A673 (cell line): ENCODE measurements at regions of chr6 and their contacts with region 1.

Region 1: DNA sequence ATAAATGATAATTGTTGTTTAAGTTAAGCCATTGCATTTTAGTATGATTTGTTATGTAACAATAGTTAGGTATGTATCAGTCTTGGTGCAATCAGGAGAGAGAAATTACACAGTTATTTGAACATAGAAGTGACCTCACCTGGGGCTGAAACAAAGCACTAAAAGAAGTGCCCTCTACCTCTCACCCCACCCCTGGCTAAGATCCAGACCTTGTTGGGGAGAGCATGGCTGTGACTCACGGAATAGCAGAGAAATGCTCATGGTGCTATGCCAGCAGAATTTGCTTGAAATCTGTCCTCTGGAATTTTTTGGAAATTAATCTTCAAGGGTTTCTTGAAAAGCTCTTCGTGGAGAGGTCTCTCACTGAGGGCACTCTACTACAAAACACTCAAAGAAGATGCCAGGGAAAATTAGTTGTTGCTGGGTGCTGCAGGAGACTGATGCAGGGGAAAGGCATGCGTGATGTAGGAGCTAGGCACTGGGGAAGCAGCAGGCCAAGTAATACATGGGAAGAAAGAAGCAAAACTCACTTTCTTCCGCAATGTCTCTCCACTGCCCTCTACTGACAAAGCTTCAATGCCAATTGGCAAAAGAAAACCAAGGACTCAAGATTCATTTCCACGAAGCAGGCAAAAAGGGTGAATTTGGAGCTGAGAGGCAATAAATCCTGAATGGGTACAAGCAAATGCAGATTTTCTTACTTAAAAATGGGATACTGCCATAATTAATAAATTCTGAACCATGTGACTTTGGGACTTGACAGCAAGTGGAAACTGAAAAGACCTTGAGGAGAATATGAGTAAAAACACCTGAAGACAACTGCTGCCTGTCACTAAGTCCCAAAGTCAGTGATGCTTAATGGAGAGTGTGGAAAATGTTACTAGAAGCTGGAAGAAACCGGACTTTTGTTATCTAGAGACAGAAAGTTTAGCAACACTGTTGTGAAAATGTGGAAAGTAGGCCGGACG is 136.3 kb upstream of the ZNF184 start:
- DNase-seq: peak; percentile 79
- H3K4me3 ChIP-seq: no peak overlapping the region
- H3K27ac ChIP-seq: no peak overlapping the region
- H3K4me1 ChIP-seq: no peaks in the 10 kb centered on the region
- H3K27me3 ChIP-seq: no peaks in the 10 kb centered on the region
- CTCF ChIP-seq: peak; percentile 76

Region 2: DNA sequence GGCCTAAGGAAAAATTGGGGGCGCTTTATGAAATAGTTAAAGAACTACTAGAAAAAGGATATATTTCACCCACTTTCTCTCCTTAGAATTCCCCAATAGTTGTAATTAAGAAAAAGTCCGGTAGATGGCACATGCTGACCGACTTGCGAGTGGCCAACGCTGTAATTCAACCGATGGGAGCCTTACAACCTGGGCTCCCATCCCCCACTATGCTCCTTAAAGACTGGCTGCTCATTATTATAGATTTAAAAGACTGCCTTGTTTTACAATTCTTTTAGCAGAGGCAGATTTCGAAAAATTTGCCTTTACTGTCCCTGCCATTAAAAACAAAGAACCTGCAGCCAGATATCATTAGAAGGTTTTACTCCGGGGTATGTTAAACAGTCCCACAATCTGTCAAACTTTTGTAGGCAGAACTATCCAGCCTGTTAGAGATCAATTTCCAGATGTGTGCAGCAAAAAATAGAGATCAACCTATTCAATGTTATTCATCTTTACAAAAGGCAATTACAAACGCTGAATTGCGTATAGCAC is 420.2 kb before region 1 on chr6:
- CTCF ChIA-PET with region 1: no interaction called
- POLR2A ChIA-PET with region 1: no interaction called
- intact Hi-C with region 1: loop called (anchors 1 kb)
- DNase-seq: peak; percentile 87
- H3K4me3 ChIP-seq: peak overlapping the region; percentile 59
- H3K27ac ChIP-seq: peak overlapping the region; percentile 5
- H3K4me1 ChIP-seq: no peaks in the 10 kb centered on the region
- H3K27me3 ChIP-seq: no peaks in the 10 kb centered on the region
- CTCF ChIP-seq: peak; percentile 67

Region 3: GRCh38 chr6:27230758-27231111 is 378.5 kb before region 1 on chr6:
- CTCF ChIA-PET with region 1: no interaction called
- POLR2A ChIA-PET with region 1: no interaction called
- intact Hi-C with region 1: no loop called
- DNase-seq: no peak
- H3K4me3 ChIP-seq: peak overlapping the region; percentile 56
- H3K27ac ChIP-seq: no peak overlapping the region
- H3K4me1 ChIP-seq: peaks cover 3% of the 10 kb centered on the region
- H3K27me3 ChIP-seq: no peaks in the 10 kb centered on the region
- CTCF ChIP-seq: no peak

Region 4: DNA sequence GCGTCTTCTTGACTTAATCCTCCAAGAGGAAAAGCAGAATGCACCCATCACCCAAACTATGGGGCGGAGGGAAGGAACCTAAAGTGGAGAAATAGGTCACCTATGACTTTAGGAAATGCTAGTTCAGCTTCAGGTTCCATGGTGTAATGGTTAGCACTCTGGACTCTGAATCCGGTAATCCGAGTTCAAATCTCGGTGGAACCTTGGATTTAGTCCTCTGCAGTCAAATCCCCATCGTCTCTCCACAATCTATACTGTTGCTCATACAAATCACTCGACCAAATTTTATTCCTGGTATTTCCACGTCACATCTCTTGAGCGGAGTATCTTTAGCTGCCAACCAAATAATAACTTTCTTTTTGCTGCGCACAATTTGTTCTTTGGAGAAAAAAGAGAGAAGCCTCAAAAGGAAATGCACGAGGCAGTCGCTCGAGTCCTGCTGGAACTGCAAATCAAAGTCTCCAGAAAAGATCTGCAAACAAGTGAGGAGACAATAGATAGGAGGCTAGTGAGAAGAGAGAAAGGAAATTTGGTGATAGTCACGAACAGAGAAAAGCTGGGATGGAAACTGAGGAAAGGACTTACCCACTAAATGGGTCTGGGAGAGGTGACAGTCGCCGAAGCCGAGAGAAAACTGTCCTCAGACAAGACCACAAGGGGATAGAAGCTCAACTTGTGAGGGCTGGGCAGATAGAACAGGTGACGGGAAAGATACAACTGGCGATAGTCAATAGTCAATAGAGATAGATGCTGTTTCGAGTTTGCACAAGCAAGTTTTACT is 313.7 kb before region 1 on chr6:
- CTCF ChIA-PET with region 1: no interaction called
- POLR2A ChIA-PET with region 1: no interaction called
- intact Hi-C with region 1: loop called (anchors 10 kb)
- DNase-seq: peak; percentile 91
- H3K4me3 ChIP-seq: peak overlapping the region; percentile 69
- H3K27ac ChIP-seq: no peak overlapping the region
- H3K4me1 ChIP-seq: peaks cover 10% of the 10 kb centered on the region
- H3K27me3 ChIP-seq: no peaks in the 10 kb centered on the region
- CTCF ChIP-seq: no peak

Region 5: DNA sequence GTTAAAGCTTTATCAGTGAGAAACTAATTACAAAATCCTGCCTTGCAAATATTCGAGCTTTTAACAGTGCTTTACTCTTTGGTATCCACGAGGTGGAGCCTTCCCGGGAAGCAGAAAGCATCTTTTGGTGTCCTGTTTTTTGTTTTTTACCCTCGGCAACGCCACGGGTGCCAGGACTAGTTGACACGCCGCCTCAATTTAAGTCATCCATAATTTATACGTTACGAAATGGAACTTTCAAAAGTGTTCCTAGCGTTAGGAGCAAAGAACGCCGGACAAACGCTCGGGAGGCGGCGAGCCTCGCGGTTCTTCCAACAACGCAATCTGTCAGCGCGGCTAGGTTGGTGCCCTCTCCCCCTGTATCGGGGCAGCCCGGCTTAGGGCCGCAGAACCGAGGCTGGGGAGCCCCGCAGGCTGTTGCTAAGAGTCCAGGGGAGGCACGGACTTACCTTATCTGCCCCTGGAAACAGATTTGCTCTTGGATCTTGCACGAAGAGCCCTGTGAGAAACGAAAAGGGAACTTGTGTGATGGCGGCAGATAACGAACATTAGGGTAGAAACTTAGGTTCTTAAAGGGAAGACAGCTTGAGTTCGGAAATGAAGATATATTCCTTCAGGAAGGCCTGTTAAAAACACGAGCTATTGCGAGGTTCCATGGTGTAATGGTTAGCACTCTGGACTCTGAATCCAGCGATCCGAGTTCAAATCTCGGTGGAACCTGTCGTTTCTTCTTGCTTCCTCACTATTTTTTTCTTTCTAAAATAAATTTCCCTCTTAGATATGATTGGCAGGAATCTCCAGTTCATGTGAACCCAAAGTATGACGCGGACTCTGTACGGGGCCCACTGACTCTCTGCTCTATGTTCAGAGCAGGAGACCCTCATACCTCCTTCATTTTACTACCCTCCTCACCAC is 90.1 kb before region 1 on chr6:
- CTCF ChIA-PET with region 1: interaction called, 15 read pairs
- POLR2A ChIA-PET with region 1: no interaction called
- intact Hi-C with region 1: loop called (anchors 2 kb)
- DNase-seq: peak; percentile 92
- H3K4me3 ChIP-seq: peak overlapping the region; percentile 70
- H3K27ac ChIP-seq: peak overlapping the region; percentile 77
- H3K4me1 ChIP-seq: peaks cover 7% of the 10 kb centered on the region
- H3K27me3 ChIP-seq: peaks cover 10% of the 10 kb centered on the region
- CTCF ChIP-seq: peak; percentile 75

Region 6: GRCh38 chr6:27582928-27583725 is 26.1 kb before region 1 on chr6:
- CTCF ChIA-PET with region 1: no interaction called
- POLR2A ChIA-PET with region 1: no interaction called
- intact Hi-C with region 1: no loop called
- DNase-seq: peak; percentile 82
- H3K4me3 ChIP-seq: peak overlapping the region; percentile 29
- H3K27ac ChIP-seq: no peak overlapping the region
- H3K4me1 ChIP-seq: no peaks in the 10 kb centered on the region
- H3K27me3 ChIP-seq: no peaks in the 10 kb centered on the region
- CTCF ChIP-seq: no peak